AG04449 (cell line): ENCODE measurements at regions of chr2 and their contacts with region 1.

Region 1: GRCh38 chr2:10688921-10689807 is 611 bp downstream of the NOL10 start:
- DNase-seq: no peak
- H3K4me3 ChIP-seq: peak overlapping the region; percentile 100
- CTCF ChIP-seq: no peak

Region 2: DNA sequence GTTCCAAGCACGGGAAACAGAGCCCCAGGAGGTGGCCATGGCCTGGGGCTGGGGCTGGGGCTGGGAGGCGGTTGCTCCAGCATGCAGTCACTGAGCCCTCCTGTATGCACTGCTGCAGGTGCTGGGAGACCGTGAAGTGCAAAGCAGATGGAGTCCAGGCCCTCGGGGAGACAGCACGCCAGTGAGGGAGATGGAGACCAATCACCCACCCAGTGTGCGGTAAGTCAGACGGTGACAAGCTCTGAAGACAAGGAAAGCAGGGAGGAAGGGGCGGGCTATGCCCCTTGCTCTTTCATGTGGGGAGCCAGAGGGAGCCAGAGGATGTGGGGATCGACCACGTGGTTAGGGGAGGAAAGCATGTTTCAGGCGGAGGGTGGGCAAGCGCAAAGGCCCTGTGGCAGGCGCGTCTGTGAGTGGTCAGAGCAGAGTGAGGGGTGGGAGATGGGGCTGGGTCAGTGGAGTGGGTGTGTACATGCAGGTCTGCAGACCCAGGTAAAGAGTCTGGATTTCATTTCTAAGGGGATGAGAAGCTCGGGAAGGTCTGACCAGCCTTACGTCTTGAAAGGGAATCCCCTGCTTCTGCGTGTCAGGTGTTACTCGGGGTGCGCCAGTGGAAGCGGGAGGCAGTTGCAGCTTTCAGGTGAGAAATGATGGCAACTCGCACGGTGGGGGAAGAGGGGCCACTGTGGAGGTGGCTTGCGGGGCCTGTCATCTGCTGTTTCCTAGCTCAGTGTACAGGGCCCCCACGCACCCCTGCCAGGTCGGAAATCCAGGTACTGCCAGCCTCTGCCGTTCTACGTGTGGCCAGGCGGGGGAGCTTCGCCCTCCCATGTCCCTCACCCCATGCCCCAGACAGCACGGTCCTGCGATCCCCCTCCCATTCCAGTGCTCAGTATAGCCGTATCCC is 547.2 kb before region 1 on chr2:
- CTCF ChIA-PET with region 1: no interaction called
- POLR2A ChIA-PET with region 1: no interaction called
- DNase-seq: no peak
- H3K4me3 ChIP-seq: no peak overlapping the region
- CTCF ChIP-seq: peak; percentile 56

Region 3: GRCh38 chr2:10668402-10669012 is 20.7 kb before region 1 on chr2:
- CTCF ChIA-PET with region 1: interaction called, 13 read pairs
- POLR2A ChIA-PET with region 1: no interaction called
- DNase-seq: no peak
- H3K4me3 ChIP-seq: no peak overlapping the region
- CTCF ChIP-seq: peak; percentile 45

Region 4: DNA sequence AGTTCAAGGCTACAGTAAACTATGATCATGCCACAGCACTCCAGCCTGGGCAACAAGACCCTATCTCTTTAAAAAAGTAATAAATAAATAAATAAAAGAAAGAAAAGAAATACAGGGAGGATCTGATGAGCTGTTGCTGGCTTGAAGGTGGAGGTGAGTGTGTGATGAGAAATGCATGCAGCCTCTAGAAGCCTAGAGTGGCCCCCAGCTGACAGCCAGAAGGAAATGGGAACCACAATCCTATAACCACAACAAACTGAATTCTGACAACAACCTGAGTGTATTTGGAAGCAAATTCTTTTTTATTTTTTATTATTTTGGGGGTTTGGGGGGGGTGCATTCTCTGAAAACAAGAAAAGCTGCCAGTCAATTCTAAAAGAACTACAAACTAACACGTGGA is 14.0 kb before region 1 on chr2:
- CTCF ChIA-PET with region 1: interaction called, 12 read pairs
- POLR2A ChIA-PET with region 1: no interaction called
- DNase-seq: no peak
- H3K4me3 ChIP-seq: no peak overlapping the region
- CTCF ChIP-seq: no peak